Sigmoid colon (tissue), 7 donors: ENCODE measurements at regions of chr15 and their contacts with region 1.

Region 1: DNA sequence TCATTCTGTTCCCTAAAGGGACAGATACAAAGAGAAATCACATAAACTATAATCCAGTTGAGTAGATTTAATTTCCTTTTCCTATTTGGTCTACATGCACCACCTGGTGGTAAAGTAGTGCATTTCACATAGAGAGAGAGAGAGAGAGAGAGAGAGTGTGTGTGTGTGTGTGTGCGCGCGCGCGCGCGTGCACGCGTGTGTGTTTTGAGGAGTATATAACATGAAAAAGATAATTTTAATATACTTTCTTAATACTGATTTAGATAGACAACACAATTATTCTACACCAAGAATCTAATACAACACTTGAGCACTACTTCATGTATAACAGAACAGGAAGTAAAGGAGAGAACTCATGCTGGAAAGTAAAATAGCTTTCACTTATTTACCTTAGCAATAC is 1.1 kb upstream of the FGF7 start:
- DNase-seq: peak; percentile 76
- H3K4me3 ChIP-seq: peak overlapping the region; percentile 12 to 57 (median 52)
- H3K27ac ChIP-seq: peak overlapping the region; percentile 64 to 79 (median 77)
- H3K4me1 ChIP-seq: peaks cover 0 to 14% (median 4%) of the 10 kb centered on the region in 4 donors
- H3K27me3 ChIP-seq: no peaks in the 10 kb centered on the region
- CTCF ChIP-seq: peak; percentile 91 to 96 (median 94)
- EP300 ChIP-seq: no peak
- POLR2A ChIP-seq: no peak

Region 2: DNA sequence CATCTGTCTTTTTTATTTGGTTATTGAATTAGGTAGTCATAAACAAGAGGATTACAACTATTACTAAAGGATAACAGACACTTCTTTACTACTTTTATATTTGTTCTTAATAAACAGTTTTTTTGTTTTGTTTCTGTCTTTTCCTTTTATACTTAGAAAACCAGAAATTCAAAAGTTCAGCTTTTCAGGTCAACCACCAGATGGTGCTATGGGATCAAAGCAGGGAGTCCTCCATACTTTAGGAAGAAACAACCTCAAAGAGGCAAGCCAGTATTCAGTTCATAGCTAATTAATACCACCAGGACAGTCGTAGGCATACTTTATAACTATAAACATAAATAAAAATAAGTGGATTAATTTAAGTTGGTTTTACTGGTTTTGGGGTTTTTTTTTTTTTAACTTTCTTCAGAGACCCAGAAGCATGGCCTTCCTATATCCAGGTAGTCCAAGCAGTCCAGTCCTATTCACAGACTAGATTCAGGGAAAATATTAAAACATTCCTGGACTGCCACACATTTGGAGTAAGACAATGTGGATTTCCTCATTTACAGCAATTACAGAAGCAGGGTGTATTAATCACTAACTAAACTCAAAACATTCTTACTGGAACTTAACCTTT is 560.1 kb before region 1 on chr15:
- intact Hi-C with region 1: loop called (anchors 5 kb)
- DNase-seq: no peak
- H3K4me3 ChIP-seq: no peak overlapping the region
- H3K27ac ChIP-seq: no peak overlapping the region
- H3K4me1 ChIP-seq: peaks cover 0 to 18% (median 7%) of the 10 kb centered on the region in 4 donors
- H3K27me3 ChIP-seq: no peaks in the 10 kb centered on the region
- CTCF ChIP-seq: peak; percentile 52 to 84 (median 76)
- EP300 ChIP-seq: no peak
- POLR2A ChIP-seq: no peak

Region 3: DNA sequence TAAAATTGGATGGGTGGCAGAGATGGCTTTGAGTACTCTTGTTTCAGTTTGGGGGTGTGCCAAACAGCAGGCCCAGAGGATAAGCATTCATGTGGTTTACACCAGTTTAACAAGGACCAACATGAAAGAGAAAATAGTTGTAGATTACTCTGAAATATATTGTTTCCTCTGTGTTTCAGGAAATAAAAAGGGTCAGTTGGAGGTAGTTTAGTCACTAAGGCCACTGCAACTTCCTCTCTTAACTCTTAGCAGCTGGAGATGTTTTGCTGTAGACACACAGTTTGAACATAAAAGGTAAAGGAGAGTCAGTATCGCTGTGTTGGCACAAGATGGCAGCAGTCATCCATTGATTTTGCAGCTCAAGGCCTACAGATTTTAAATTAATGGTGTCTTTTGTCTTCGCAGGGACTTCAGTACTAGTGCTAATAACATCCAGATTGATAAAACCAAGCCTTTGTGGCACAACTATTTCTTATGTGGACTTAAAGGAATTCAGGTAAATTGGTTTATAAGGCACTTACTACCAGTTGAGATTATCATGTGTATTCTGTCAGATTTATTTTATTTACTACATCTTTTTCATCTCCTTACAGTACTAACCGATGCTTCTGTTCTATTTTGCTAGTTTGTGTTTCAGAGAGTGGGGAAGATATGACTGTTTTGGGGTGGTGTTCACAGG is 186.4 kb before region 1 on chr15:
- intact Hi-C with region 1: loop called (anchors 1 kb)
- DNase-seq: peak; percentile 78
- H3K4me3 ChIP-seq: no peak overlapping the region
- H3K27ac ChIP-seq: peak overlapping the region; percentile 10 to 78 (median 68)
- H3K4me1 ChIP-seq: peaks cover 0 to 55% (median 45%) of the 10 kb centered on the region in 4 donors
- H3K27me3 ChIP-seq: no peaks in the 10 kb centered on the region
- CTCF ChIP-seq: peak; percentile 58 to 83 (median 66)
- EP300 ChIP-seq: no peak
- POLR2A ChIP-seq: no peak

Region 4: GRCh38 chr15:49901996-49902684 is 480.1 kb after region 1 on chr15:
- intact Hi-C with region 1: loop called (anchors 10 kb)
- DNase-seq: no peak
- H3K4me3 ChIP-seq: no peak overlapping the region
- H3K27ac ChIP-seq: peak overlapping the region; percentile 65 to 77 (median 73)
- H3K4me1 ChIP-seq: peaks cover 0 to 60% (median 50%) of the 10 kb centered on the region in 4 donors
- H3K27me3 ChIP-seq: no peaks in the 10 kb centered on the region
- CTCF ChIP-seq: peak in 1 of 4 experiments; percentile 17
- EP300 ChIP-seq: no peak
- POLR2A ChIP-seq: no peak

Region 5: GRCh38 chr15:50145451-50145872 is 723.5 kb after region 1 on chr15:
- intact Hi-C with region 1: loop called (anchors 2 kb)
- DNase-seq: no peak
- H3K4me3 ChIP-seq: no peak overlapping the region
- H3K27ac ChIP-seq: no peak overlapping the region
- H3K4me1 ChIP-seq: peaks cover 0 to 15% (median 5%) of the 10 kb centered on the region in 4 donors
- H3K27me3 ChIP-seq: no peaks in the 10 kb centered on the region
- CTCF ChIP-seq: peak; percentile 43 to 62 (median 53)
- EP300 ChIP-seq: no peak
- POLR2A ChIP-seq: no peak